ENCODE measurements at regions of chr20 and their contacts with region 1.

Region 1: DNA sequence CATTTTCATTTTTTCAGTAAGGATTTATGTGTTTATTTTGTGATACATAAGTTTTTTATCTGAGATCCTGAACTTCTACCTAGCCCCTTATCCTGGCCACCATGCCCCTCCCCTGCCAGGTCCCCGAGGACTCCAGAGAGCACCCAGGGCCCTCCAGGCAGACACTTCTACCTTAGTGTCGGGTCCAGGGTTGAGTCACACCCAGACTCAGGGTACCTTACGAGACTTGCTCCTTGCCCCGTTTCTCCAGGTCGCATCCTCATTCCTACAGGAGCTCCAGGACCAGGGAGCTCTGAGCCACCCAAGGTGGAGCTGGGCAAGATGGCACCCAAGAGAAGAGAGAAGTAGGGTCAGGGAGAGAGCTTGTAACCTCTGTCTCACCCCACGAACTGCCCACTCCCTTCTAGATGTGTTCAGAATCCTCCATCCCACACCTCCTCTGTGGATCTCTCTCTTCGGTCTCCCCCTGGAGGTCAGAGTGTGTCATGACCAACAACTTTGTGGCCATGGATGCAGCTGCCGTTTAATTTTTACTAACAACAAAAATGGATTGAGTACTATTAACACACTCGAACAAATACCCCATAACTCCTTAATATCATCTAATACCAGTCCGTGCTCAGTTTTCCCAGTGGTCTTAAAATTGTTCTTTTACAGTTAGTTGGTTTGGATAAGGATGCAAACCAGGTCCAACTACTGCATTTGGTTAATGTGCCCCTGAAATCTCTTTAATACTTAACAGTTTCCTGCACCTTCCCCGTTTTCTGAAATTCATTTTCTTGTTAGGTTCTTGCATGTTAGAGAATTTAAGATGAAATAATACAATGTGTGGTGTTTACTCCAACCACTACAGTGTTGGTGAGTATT is 130.6 kb upstream of the INSM1 start:
- DNase-seq: peak; percentile 21
- H3K4me3 Mint-ChIP-seq: no peak overlapping the region
- H3K27ac Mint-ChIP-seq: no peak overlapping the region
- H3K4me1 Mint-ChIP-seq: no peaks in the 10 kb centered on the region
- H3K27me3 Mint-ChIP-seq: peaks cover 4% of the 10 kb centered on the region

Region 2: GRCh38 chr20:20083807-20084206 is 153.5 kb before region 1 on chr20:
- CTCF ChIA-PET with region 1: interaction called, 11 read pairs
- POLR2A ChIA-PET with region 1: no interaction called
- DNase-seq: no peak
- H3K4me3 Mint-ChIP-seq: no peak overlapping the region
- H3K27ac Mint-ChIP-seq: no peak overlapping the region
- H3K4me1 Mint-ChIP-seq: peaks cover 2% of the 10 kb centered on the region
- H3K27me3 Mint-ChIP-seq: peaks cover 22% of the 10 kb centered on the region

Region 3: GRCh38 chr20:20130399-20130798 is 106.9 kb before region 1 on chr20:
- CTCF ChIA-PET with region 1: no interaction called
- POLR2A ChIA-PET with region 1: no interaction called
- DNase-seq: no peak
- H3K4me3 Mint-ChIP-seq: no peak overlapping the region
- H3K27ac Mint-ChIP-seq: no peak overlapping the region
- H3K4me1 Mint-ChIP-seq: no peaks in the 10 kb centered on the region
- H3K27me3 Mint-ChIP-seq: peaks cover 8% of the 10 kb centered on the region

Region 4: DNA sequence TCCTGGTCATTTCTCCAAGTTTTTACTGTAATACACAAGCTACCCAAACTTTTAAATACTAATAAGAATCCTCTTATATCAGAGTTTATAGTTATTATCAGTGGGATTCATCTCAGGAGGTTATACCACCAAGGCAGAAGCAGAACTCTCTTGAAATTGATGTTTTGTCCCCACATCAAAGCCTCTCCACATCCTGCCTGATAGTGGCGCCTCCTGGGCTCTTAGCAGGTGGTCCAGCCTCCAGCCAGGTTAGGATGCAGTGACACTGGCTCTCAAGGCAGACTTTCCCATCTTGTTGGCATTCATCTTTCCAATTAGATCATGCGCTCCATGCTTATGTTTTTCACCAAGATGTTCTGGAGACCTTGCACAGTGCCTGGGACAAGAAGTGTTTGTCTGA is 48.7 kb after region 1 on chr20:
- CTCF ChIA-PET with region 1: no interaction called
- POLR2A ChIA-PET with region 1: no interaction called
- DNase-seq: no peak
- H3K4me3 Mint-ChIP-seq: no peak overlapping the region
- H3K27ac Mint-ChIP-seq: no peak overlapping the region
- H3K4me1 Mint-ChIP-seq: no peaks in the 10 kb centered on the region
- H3K27me3 Mint-ChIP-seq: peaks cover 6% of the 10 kb centered on the region